ENCODE measurements at regions of chr16 and their contacts with region 1.

Region 1: DNA sequence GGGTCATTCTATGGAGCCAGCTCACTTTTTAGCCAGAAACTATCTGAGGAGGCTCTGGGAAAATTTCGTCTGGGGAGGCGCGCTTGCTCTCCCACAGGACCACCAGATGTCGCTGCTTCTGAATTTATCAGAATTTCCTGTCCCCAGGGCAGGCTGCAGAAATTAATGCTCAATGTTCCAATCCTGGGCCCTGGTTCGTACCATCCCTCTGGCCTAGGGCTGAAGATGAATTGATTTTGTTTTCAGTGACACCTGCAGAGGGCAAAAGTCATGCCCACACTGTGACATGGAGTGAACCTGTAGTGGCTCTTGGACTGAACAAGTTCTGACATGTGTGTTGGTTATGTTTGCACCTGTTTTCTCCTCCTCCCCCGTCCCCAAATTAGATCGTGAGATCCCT is 482.6 kb downstream of the NPIPA7 start:
- DNase-seq: peak; percentile 46
- ATAC-seq: peak; percentile 94
- H3K4me3 ChIP-seq: no peak overlapping the region
- H3K27ac ChIP-seq: no peak overlapping the region
- H3K4me1 ChIP-seq: peaks cover 4% of the 10 kb centered on the region; the same call in 1 of the 2 replicates
- H3K27me3 ChIP-seq: no peaks in the 10 kb centered on the region; a peak in 1 of 4 replicates
- CTCF ChIP-seq: peak; percentile 70 to 87 (median 86)
- EP300 ChIP-seq: no peak
- POLR2A ChIP-seq: no peak
- RAD21 ChIP-seq: peak; percentile 83

Region 2: GRCh38 chr16:16890964-16891363 is 29.4 kb after region 1 on chr16:
- CTCF ChIA-PET with region 1: no interaction called
- POLR2A ChIA-PET with region 1: no interaction called
- RAD21 ChIA-PET with region 1: no interaction called
- SMC1A ChIA-PET with region 1: no interaction called
- in situ Hi-C with region 1: no loop called
- intact Hi-C with region 1: no loop called
- DNase-seq: no peak
- ATAC-seq: no peak
- H3K4me3 ChIP-seq: no peak overlapping the region
- H3K27ac ChIP-seq: no peak overlapping the region
- H3K4me1 ChIP-seq: no peaks in the 10 kb centered on the region
- H3K27me3 ChIP-seq: no peaks in the 10 kb centered on the region; a peak in 1 of 4 replicates
- CTCF ChIP-seq: no peak
- EP300 ChIP-seq: no peak
- POLR2A ChIP-seq: no peak
- RAD21 ChIP-seq: no peak

Region 3: DNA sequence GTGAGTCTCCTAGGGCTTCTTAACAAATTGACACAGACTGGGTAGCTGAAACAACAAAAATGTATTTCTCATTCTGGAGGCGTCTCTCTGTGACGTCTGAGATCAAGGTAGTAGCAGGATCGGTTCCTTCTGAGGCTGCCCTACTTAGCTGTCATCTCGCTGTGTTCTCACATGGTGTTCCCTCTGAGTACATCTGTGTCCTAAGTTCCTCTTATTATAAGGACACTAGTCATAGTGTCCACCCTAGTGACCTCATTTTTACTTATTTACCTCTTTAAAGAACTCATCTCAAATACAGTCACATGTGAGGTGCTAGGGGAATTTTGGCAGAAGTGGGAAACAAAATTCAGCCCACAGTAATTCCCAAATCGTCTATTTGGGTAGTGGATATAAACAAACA is 46.5 kb after region 1 on chr16:
- CTCF ChIA-PET with region 1: no interaction called
- POLR2A ChIA-PET with region 1: no interaction called
- RAD21 ChIA-PET with region 1: no interaction called
- SMC1A ChIA-PET with region 1: no interaction called
- in situ Hi-C with region 1: no loop called
- intact Hi-C with region 1: no loop called
- DNase-seq: no peak
- ATAC-seq: peak; percentile 67
- H3K4me3 ChIP-seq: no peak overlapping the region
- H3K27ac ChIP-seq: no peak overlapping the region
- H3K4me1 ChIP-seq: no peaks in the 10 kb centered on the region
- H3K27me3 ChIP-seq: no peaks in the 10 kb centered on the region
- CTCF ChIP-seq: no peak
- EP300 ChIP-seq: no peak; a peak in 1 of 4 replicates
- POLR2A ChIP-seq: no peak
- RAD21 ChIP-seq: no peak

Region 4: DNA sequence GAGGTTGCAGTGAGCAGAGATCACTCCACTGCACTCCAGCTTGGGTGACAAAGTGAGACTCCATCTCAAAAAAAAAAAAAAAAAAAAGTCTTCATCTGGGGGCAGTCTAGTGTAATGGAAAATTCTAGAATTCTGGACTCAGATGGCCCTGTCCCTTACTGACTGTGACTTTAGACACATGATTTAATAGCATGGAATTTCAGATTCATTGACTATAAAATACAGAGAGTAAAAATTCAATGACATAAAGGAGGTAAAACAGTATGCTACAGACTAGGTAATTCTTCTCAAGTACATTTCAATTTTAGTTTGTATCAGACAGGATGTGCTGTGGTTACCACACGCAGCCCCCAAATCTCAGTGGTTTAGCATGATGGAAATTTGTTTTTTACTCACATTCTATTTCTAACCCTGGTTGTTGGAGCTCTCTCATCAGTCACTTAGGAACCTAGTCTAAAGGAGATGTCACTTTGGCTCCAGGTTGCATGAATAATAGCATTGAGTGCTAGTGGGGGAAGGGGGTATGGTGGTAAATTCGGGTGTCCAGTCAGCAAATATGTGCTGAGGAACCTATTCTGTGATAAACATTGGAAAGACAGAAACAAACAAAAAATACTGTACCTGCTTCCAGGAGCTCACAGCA is 165.2 kb after region 1 on chr16:
- CTCF ChIA-PET with region 1: interaction called, 5 read pairs
- POLR2A ChIA-PET with region 1: no interaction called
- RAD21 ChIA-PET with region 1: interaction called, 4 read pairs
- SMC1A ChIA-PET with region 1: interaction called, 14 read pairs
- in situ Hi-C with region 1: no loop called
- intact Hi-C with region 1: loop called (anchors 5 kb)
- DNase-seq: peak; percentile 92
- ATAC-seq: peak; percentile 83
- H3K4me3 ChIP-seq: peak overlapping the region; percentile 19; the same call in 1 of the 2 replicates
- H3K27ac ChIP-seq: peak overlapping the region; percentile 96
- H3K4me1 ChIP-seq: peaks cover 40% of the 10 kb centered on the region
- H3K27me3 ChIP-seq: no peaks in the 10 kb centered on the region
- CTCF ChIP-seq: no peak
- EP300 ChIP-seq: peak; percentile 91 to 97
- POLR2A ChIP-seq: no peak
- RAD21 ChIP-seq: peak; percentile 36

Region 5: GRCh38 chr16:17134586-17134985 is 273.0 kb after region 1 on chr16:
- CTCF ChIA-PET with region 1: interaction called, 8 read pairs
- POLR2A ChIA-PET with region 1: no interaction called
- RAD21 ChIA-PET with region 1: interaction called, 11 read pairs
- SMC1A ChIA-PET with region 1: interaction called, 12 read pairs
- in situ Hi-C with region 1: no loop called
- intact Hi-C with region 1: loop called (anchors 5 kb)
- DNase-seq: peak; percentile 82
- ATAC-seq: peak; percentile 97
- H3K4me3 ChIP-seq: no peak overlapping the region
- H3K27ac ChIP-seq: no peak overlapping the region
- H3K4me1 ChIP-seq: peaks cover 26% of the 10 kb centered on the region
- H3K27me3 ChIP-seq: no peaks in the 10 kb centered on the region
- CTCF ChIP-seq: no peak
- EP300 ChIP-seq: peak; percentile 42 to 77; a peak in 3 of 4 replicates
- POLR2A ChIP-seq: no peak
- RAD21 ChIP-seq: no peak

Region 6: GRCh38 chr16:17194190-17194780 is 332.7 kb after region 1 on chr16:
- CTCF ChIA-PET with region 1: interaction called, 10 read pairs
- POLR2A ChIA-PET with region 1: no interaction called
- RAD21 ChIA-PET with region 1: interaction called, 3 read pairs
- SMC1A ChIA-PET with region 1: interaction called, 3 read pairs
- in situ Hi-C with region 1: no loop called
- intact Hi-C with region 1: no loop called
- DNase-seq: no peak
- ATAC-seq: peak; percentile 82
- H3K4me3 ChIP-seq: no peak overlapping the region
- H3K27ac ChIP-seq: no peak overlapping the region
- H3K4me1 ChIP-seq: no peaks in the 10 kb centered on the region
- H3K27me3 ChIP-seq: no peaks in the 10 kb centered on the region
- CTCF ChIP-seq: peak; percentile 53 to 87 (median 69)
- EP300 ChIP-seq: no peak
- POLR2A ChIP-seq: no peak
- RAD21 ChIP-seq: peak; percentile 60

Region 7: GRCh38 chr16:17258848-17259713 is 397.5 kb after region 1 on chr16:
- CTCF ChIA-PET with region 1: interaction called, 15 read pairs
- POLR2A ChIA-PET with region 1: no interaction called
- RAD21 ChIA-PET with region 1: interaction called, 3 read pairs
- SMC1A ChIA-PET with region 1: interaction called, 3 read pairs
- in situ Hi-C with region 1: no loop called
- intact Hi-C with region 1: no loop called
- DNase-seq: peak; percentile 79
- ATAC-seq: peak; percentile 88
- H3K4me3 ChIP-seq: peak overlapping the region; percentile 47
- H3K27ac ChIP-seq: peak overlapping the region; percentile 93
- H3K4me1 ChIP-seq: peaks cover 33% of the 10 kb centered on the region
- H3K27me3 ChIP-seq: no peaks in the 10 kb centered on the region
- CTCF ChIP-seq: peak; percentile 64 to 75 (median 68)
- EP300 ChIP-seq: peak; percentile 22 to 83; a peak in 2 of 4 replicates
- POLR2A ChIP-seq: peak; percentile 62
- RAD21 ChIP-seq: peak; percentile 68

Region 8: GRCh38 chr16:17459530-17460521 is 598.3 kb after region 1 on chr16:
- CTCF ChIA-PET with region 1: no interaction called
- POLR2A ChIA-PET with region 1: no interaction called
- RAD21 ChIA-PET with region 1: no interaction called
- SMC1A ChIA-PET with region 1: no interaction called
- in situ Hi-C with region 1: no loop called
- intact Hi-C with region 1: loop called (anchors 2 kb)
- DNase-seq: no peak
- ATAC-seq: peak; percentile 72
- H3K4me3 ChIP-seq: no peak overlapping the region; the same call in 1 of the 2 replicates
- H3K27ac ChIP-seq: no peak overlapping the region
- H3K4me1 ChIP-seq: peaks cover 40% of the 10 kb centered on the region
- H3K27me3 ChIP-seq: no peaks in the 10 kb centered on the region
- CTCF ChIP-seq: no peak
- EP300 ChIP-seq: no peak
- POLR2A ChIP-seq: no peak
- RAD21 ChIP-seq: no peak

Measured in GM12878 (cell line).